ENCODE measurements at regions of chr3 and their contacts with region 1.

Region 1: DNA sequence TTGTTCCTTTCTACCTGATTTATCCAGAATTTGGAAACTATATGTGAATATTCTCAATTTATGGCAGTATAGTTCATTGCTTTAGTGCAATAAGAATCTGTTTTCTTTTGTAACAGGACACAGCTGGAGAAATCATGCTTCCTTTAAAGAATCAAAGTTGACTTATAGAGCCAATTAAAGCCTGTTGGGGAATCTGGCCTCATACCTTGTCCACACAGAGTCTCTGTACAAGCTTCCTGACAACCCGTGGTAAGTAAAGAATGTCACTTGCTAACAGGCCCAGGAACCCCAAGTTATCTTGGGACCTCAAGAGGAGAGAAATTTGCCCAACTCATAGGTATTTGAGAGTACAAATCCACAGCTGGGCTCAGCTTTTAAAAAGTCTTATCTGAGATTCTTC is 10.2 kb downstream of the ZNF445 start:
- DNase-seq: no peak
- ATAC-seq: no peak
- H3K4me3 ChIP-seq: no peak overlapping the region
- H3K27ac ChIP-seq: no peak overlapping the region
- H3K4me1 ChIP-seq: peaks cover 23% of the 10 kb centered on the region
- H3K27me3 ChIP-seq: no peaks in the 10 kb centered on the region
- CTCF ChIP-seq: no peak

Region 2: GRCh38 chr3:44292276-44292675 is 175.0 kb before region 1 on chr3:
- CTCF ChIA-PET with region 1: no interaction called
- POLR2A ChIA-PET with region 1: interaction called, 14 read pairs
- intact Hi-C with region 1: no loop called
- DNase-seq: no peak
- ATAC-seq: no peak
- H3K4me3 ChIP-seq: no peak overlapping the region
- H3K27ac ChIP-seq: no peak overlapping the region
- H3K4me1 ChIP-seq: no peaks in the 10 kb centered on the region
- H3K27me3 ChIP-seq: no peaks in the 10 kb centered on the region
- CTCF ChIP-seq: no peak

Region 3: GRCh38 chr3:44516230-44516629 is 49.0 kb after region 1 on chr3:
- CTCF ChIA-PET with region 1: no interaction called
- POLR2A ChIA-PET with region 1: interaction called, 12 read pairs
- intact Hi-C with region 1: no loop called
- DNase-seq: no peak
- ATAC-seq: no peak
- H3K4me3 ChIP-seq: no peak overlapping the region
- H3K27ac ChIP-seq: no peak overlapping the region
- H3K4me1 ChIP-seq: peaks cover 5% of the 10 kb centered on the region; the same call in 1 of the 2 replicates
- H3K27me3 ChIP-seq: peaks cover 6% of the 10 kb centered on the region; the same call in 1 of the 2 replicates
- CTCF ChIP-seq: no peak

Region 4: GRCh38 chr3:44729384-44729910 is 262.2 kb after region 1 on chr3 and contains the start of gene ZNF501:
- CTCF ChIA-PET with region 1: no interaction called
- POLR2A ChIA-PET with region 1: no interaction called
- intact Hi-C with region 1: no loop called
- DNase-seq: no peak
- ATAC-seq: no peak
- H3K4me3 ChIP-seq: no peak within 1 kb of the TSS
- H3K27ac ChIP-seq: no peak within 1 kb of the TSS
- H3K4me1 ChIP-seq: no peaks in the 10 kb centered on the region
- H3K27me3 ChIP-seq: no peaks in the 10 kb centered on the region
- CTCF ChIP-seq: no peak
- total RNA-seq, gene ZNF501: not detected in 2 replicates

Measured in PC-3 (cell line).